ENCODE measurements at regions of chr14 and their contacts with region 1.

Region 1: GRCh38 chr14:70821584-70822529 is 12.5 kb upstream of the MAP3K9 start:
- DNase-seq: peak; percentile 48
- H3K4me3 Mint-ChIP-seq: peak overlapping the region; percentile 69
- H3K27ac Mint-ChIP-seq: peak overlapping the region; percentile 61
- H3K4me1 Mint-ChIP-seq: peaks cover 24% of the 10 kb centered on the region
- H3K27me3 Mint-ChIP-seq: peaks cover 3% of the 10 kb centered on the region

Region 2: DNA sequence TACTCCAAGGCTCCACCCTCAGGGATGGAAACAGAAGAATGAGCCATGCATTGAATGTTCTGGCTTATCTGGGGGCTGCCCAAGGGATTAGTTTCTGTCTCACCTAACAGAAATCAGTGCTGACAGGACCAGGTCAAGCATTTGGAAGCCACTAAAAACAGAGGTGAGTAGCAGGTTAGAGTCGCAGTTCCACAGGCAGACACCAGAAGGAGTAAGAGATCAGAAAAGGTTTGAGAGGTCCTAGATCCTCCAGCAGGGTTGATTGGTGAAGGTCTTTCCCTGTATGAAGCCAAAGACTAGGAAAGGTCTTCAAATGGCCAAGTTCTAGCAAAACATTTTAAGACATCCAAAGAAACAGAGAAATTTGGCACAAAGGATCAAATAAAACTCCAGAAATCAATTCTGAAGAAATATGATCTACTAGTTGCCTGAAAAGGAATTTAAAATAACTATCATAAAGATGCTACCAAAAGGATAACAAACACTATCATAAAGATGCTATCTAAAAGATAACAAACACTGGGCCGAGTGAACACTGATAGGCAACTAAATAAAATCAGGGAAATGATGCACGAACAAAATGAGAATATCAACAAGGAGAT is 199.6 kb before region 1 on chr14:
- intact Hi-C with region 1: loop called (anchors 1 kb)
- DNase-seq: peak; percentile 51
- H3K4me3 Mint-ChIP-seq: no peak overlapping the region
- H3K27ac Mint-ChIP-seq: no peak overlapping the region
- H3K4me1 Mint-ChIP-seq: no peaks in the 10 kb centered on the region
- H3K27me3 Mint-ChIP-seq: peaks cover 7% of the 10 kb centered on the region

Region 3: DNA sequence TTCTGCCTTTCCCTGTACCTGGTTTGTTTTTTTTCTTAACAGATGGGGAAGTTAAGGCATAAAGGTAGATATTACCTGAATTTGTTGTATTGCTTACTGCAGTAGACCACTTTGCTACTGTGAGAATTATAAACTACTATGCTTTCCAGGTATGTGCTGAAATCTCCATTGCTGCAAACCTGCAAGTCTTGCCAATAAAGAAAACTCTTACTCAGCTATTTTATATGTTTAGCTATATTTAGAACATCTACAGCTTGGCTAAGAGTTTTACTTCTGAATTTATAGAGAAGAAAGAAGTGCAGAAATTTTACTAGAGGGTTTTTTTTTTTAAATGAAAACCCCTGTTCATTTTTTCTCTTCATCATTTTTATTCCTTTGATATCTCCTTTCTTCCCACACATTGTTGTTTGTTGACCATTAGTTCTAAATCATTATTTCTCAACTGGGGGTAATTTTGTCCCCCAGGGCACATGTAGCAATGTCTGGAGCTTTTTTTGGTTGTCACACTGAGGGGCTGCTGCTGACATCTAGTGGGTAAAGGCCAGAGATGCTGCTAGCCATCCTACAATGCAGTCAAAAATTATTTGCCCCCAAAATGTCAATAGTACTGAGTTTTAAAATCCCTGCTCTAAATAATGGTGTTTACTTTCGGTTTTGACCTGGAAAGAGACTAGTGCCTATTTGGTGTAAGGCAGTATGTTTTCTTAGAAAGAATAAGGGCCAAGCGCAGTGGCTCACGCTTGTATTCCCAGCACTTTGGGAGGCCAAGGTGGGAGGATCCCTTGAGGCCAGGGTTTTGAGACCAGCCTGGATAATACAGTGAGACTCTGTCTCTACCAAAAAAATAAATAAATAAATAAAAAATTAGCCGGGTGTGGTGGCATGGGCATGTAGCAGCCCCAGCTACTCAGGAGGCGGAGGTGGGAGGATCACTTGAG is 134.0 kb after region 1 on chr14:
- intact Hi-C with region 1: loop called (anchors 1 kb)
- DNase-seq: peak; percentile 19
- H3K4me3 Mint-ChIP-seq: no peak overlapping the region
- H3K27ac Mint-ChIP-seq: no peak overlapping the region
- H3K4me1 Mint-ChIP-seq: peaks cover 20% of the 10 kb centered on the region
- H3K27me3 Mint-ChIP-seq: no peaks in the 10 kb centered on the region

Region 4: GRCh38 chr14:70972107-70972976 is 150.5 kb after region 1 on chr14:
- intact Hi-C with region 1: loop called (anchors 1 kb)
- DNase-seq: peak; percentile 69
- H3K4me3 Mint-ChIP-seq: no peak overlapping the region
- H3K27ac Mint-ChIP-seq: no peak overlapping the region
- H3K4me1 Mint-ChIP-seq: peaks cover 14% of the 10 kb centered on the region
- H3K27me3 Mint-ChIP-seq: no peaks in the 10 kb centered on the region